Activated CD8-positive, alpha-beta T cell treated with anti-CD3 and anti-CD28 coated beads for 36 hours (primary cell): ENCODE measurements at regions of chr3 and their contacts with region 1.

Region 1: DNA sequence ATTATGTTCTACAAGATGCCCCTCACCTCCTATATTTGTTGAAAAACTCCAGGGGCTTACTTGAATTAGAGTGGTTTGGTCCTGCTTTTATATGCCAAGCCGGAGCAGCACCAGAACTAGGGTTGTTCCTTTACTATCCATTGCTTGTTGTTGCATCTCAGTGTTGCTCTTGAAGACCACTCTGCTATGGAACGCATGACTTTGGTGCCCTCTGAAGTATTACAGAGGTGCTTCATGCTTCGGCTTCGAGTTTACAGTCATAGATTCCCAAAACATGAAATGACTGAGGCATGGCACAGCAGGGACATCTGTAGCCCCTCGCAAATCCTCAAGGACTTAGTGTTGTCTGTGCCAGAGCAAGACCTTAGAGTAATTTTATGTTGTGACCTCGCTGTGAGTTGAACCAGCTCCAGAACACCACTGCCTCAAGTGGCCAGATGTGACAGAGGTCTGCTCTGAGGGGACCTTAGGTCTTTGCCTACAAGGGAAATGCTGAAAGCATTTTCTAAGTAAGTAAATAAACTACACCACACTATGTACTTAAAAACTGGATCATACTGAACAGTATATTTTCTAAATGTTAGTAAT is 67.2 kb upstream of the SIAH2 start:
- DNase-seq: peak; percentile 28
- ATAC-seq: peak; percentile 66
- H3K4me3 Mint-ChIP-seq: no peak overlapping the region
- H3K27ac Mint-ChIP-seq: no peak overlapping the region
- H3K4me1 Mint-ChIP-seq: no peaks in the 10 kb centered on the region
- H3K27me3 Mint-ChIP-seq: no peaks in the 10 kb centered on the region
- CTCF ChIP-seq: peak; percentile 46

Region 2: GRCh38 chr3:150840802-150841515 is 10.8 kb after region 1 on chr3:
- CTCF ChIA-PET with region 1: interaction called, 10 read pairs
- POLR2A ChIA-PET with region 1: no interaction called
- intact Hi-C with region 1: no loop called
- DNase-seq: peak; percentile 4
- ATAC-seq: no peak
- H3K4me3 Mint-ChIP-seq: no peak overlapping the region
- H3K27ac Mint-ChIP-seq: no peak overlapping the region
- H3K4me1 Mint-ChIP-seq: no peaks in the 10 kb centered on the region
- H3K27me3 Mint-ChIP-seq: peaks cover 20% of the 10 kb centered on the region
- CTCF ChIP-seq: no peak

Region 3: DNA sequence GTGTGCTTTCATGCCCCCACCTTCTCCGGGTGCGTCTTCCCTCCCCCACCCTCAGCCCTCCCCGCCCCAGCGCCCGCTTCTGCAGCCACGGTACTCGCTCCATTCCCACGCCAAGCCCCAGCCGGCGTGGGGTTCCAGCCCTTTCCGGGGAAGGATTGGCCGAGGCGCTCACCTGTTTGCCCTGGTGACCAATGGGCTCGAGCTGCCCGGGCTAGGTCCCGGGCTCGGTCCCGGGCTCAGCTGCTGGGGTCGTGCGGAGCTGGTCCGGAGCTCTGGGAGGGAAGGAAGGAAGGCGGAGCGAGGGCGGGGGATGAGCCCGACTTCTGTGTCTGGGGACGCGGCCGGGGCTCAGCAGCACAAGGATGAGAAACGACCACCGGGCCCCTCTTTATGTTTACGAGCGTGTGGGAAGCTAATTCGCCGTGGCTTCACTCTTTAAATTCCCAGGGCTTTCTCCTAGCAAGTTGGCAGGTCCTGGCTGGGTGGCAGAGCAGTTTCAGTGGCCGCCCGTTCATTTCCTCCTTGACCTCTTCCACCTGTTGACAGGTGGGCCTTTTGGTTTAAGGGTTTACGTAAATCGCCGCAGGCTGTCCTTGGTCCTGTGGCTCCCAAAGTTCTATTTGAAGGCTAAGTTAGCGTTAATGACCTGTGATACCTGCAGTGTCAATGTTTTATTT is 630.7 kb after region 1 on chr3 and contains the start of gene IGSF10:
- CTCF ChIA-PET with region 1: no interaction called
- POLR2A ChIA-PET with region 1: no interaction called
- intact Hi-C with region 1: no loop called
- DNase-seq: no peak
- ATAC-seq: no peak
- H3K4me3 Mint-ChIP-seq: no peak within 1 kb of the TSS
- H3K27ac Mint-ChIP-seq: no peak within 1 kb of the TSS
- H3K4me1 Mint-ChIP-seq: peaks cover 2% of the 10 kb centered on the region
- H3K27me3 Mint-ChIP-seq: peaks cover 8% of the 10 kb centered on the region
- CTCF ChIP-seq: no peak
- total RNA-seq, gene IGSF10: not detected